ENCODE measurements at regions of chr10 and their contacts with region 1.

Region 1: DNA sequence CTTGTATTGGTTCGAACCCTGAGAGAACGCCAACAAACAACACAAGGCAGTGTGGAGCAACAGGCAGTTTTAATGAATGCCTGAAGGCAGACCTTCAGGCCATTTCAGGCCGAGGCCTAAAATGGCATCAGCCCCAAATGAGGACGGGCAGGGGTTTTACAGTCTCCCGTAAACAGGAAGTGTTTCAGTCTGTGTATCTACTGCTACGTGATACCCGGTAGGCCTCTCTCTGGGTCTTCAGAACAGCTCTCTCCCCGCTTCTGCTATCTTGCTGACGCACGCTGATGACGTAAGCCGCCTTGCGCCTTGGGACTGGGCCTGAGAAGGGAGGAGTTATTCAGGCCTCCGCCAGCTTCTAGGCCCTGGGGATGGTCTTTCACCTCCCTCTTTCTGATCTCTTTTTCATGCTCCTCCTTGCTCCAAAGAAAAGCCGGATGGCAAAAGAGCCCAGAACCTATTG is 67.7 kb downstream of the ST8SIA6 start:
- DNase-seq: no peak
- H3K4me3 Mint-ChIP-seq: no peak overlapping the region
- H3K27ac Mint-ChIP-seq: no peak overlapping the region
- H3K4me1 Mint-ChIP-seq: no peaks in the 10 kb centered on the region
- H3K27me3 Mint-ChIP-seq: peaks cover 2% of the 10 kb centered on the region

Region 2: DNA sequence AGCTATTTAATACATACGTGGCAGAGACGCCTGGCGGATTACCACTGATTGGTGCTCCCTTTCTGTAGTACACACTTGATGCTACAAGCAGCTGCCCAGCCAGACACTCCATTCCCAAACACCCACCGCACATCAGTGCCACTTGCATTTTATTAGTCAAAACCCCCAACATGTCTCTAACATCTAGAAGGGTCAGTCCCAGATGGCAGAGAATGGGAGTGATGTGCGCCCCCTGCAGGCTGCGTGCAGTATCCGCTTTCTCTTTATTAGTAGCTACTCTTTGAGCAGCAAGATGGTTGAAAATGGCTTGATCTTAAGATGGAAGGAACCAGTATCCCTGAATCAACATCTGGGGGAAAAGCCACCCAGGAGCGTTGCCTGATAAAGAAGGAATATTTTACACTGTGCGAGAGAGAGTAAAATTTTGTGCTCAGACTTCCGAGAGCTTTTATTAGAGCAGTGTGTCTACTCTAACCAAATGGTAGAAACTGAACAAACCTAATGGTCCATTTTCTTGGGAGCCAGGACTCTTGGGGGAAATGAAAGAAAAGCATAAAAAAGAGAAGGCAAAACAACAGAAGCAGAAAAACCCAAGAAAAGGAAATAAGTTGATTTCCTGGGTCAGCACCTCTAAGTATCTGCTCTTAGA is 10.6 kb before region 1 on chr10:
- CTCF ChIA-PET with region 1: interaction called, 11 read pairs
- POLR2A ChIA-PET with region 1: no interaction called
- DNase-seq: peak; percentile 42
- H3K4me3 Mint-ChIP-seq: no peak overlapping the region
- H3K27ac Mint-ChIP-seq: no peak overlapping the region
- H3K4me1 Mint-ChIP-seq: no peaks in the 10 kb centered on the region
- H3K27me3 Mint-ChIP-seq: peaks cover 6% of the 10 kb centered on the region